Aorta (tissue), 5 donors: ENCODE measurements at regions of chr1 and their contacts with region 1.

Region 1: DNA sequence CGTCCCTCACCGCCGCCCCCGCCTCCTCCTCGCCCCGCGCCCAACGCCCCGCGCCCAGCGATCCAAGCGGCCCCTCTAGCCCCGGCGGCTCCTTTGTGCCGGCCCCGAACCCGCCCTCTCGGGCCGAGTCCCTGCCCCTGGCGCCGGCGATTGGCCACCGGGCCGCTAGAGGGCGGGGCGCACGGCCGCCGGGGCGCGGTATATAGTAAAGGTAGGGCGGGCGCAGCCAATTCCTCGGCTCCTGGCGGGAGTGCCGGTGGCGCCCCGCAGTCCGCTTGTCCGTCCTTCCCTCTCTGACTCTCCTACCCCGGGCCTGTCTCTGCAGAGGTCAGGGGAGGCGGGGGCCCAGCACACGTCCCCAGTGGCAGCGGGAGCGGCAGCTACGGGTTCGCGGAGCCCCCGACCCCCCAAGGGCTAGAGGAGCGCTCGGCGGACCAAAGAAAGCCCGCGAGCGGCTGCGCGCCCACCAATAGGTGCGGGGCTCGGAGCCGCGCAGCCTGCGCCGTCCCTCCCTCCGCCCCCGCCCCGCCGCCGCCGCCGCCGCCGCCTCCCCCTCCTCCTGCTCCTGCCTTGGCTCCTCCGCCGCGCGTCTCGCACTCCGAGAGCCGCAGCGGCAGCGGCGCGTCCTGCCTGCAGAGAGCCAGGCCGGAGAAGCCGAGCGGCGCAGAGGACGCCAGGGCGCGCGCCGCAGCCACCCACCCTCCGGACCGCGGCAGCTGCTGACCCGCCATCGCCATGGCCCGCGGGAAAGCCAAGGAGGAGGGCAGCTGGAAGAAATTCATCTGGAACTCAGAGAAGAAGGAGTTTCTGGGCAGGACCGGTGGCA is at the start of gene ATP1B1:
- DNase-seq: peak; percentile 88 to 94
- ATAC-seq: peak; percentile 92
- H3K4me3 ChIP-seq: peak within 1 kb of the TSS; percentile 84 to 85
- H3K27ac ChIP-seq: peak within 1 kb of the TSS in 1 of 2 donors; percentile 81
- H3K4me1 ChIP-seq: peaks cover 0 to 2% of the 10 kb centered on the region in 2 donors
- H3K27me3 ChIP-seq: no peaks in the 10 kb centered on the region
- total RNA-seq, gene ATP1B1: 7.1 to 8.4 TPM

Region 2: GRCh38 chr1:167564612-167565270 is 1541.6 kb before region 1 on chr1:
- intact Hi-C with region 1: no loop called
- DNase-seq: no peak
- ATAC-seq: no peak
- H3K4me3 ChIP-seq: no peak overlapping the region
- H3K27ac ChIP-seq: no peak overlapping the region
- H3K4me1 ChIP-seq: no peaks in the 10 kb centered on the region
- H3K27me3 ChIP-seq: no peaks in the 10 kb centered on the region

Region 3: DNA sequence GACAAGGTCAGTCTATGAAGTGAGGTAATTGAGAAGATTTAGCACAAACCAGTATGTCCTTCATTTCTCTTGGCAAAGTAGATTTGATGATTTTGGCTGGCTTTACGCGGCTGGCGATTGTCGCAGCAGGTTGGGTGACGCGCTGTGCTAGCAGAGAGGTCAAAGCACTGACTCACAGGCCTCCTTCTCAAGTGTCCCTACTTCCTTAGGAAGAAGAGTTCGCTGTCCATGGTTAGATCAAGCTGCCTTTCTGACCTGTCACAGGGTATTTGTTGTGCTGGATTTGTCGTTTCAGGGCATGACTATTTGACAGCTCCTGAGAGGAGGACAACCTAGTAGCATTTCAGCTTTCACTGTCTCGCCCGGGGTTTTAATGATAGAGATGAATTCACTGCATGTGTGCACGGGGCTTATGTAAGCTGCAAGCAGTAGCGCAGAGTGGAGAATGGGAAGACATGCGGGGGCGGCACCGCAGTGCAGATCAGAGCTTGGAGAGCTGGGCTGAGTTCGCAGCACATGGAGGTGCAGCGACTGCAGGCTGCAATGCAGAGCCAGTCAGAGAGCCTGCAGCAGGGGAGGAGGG is 497.1 kb before region 1 on chr1:
- intact Hi-C with region 1: loop called in 1 of 2 experiments (anchors 5 kb)
- DNase-seq: peak; percentile 80 to 88
- ATAC-seq: peak; percentile 82
- H3K4me3 ChIP-seq: no peak overlapping the region
- H3K27ac ChIP-seq: peak overlapping the region; percentile 68 to 95
- H3K4me1 ChIP-seq: peaks cover 8 to 12% of the 10 kb centered on the region in 2 donors
- H3K27me3 ChIP-seq: no peaks in the 10 kb centered on the region

Region 4: GRCh38 chr1:169003864-169004516 is 102.3 kb before region 1 on chr1:
- intact Hi-C with region 1: loop called in 1 of 2 experiments (anchors 10 kb)
- DNase-seq: peak; percentile 73 to 79
- ATAC-seq: peak; percentile 38
- H3K4me3 ChIP-seq: no peak overlapping the region
- H3K27ac ChIP-seq: peak overlapping the region; percentile 26 to 60
- H3K4me1 ChIP-seq: peaks cover 0 to 4% of the 10 kb centered on the region in 2 donors
- H3K27me3 ChIP-seq: no peaks in the 10 kb centered on the region

Region 5: GRCh38 chr1:169175461-169175860 is 69.2 kb after region 1 on chr1:
- intact Hi-C with region 1: no loop called
- DNase-seq: no peak
- ATAC-seq: no peak
- H3K4me3 ChIP-seq: no peak overlapping the region
- H3K27ac ChIP-seq: no peak overlapping the region
- H3K4me1 ChIP-seq: no peaks in the 10 kb centered on the region
- H3K27me3 ChIP-seq: no peaks in the 10 kb centered on the region

Region 6: GRCh38 chr1:169348383-169349036 is 242.2 kb after region 1 on chr1:
- intact Hi-C with region 1: loop called in 1 of 2 experiments (anchors 10 kb)
- DNase-seq: no peak
- ATAC-seq: no peak
- H3K4me3 ChIP-seq: no peak overlapping the region
- H3K27ac ChIP-seq: no peak overlapping the region
- H3K4me1 ChIP-seq: no peaks in the 10 kb centered on the region
- H3K27me3 ChIP-seq: no peaks in the 10 kb centered on the region